CD4-positive, alpha-beta T cell (primary cell): ENCODE measurements at regions of chr10 and their contacts with region 1.

Region 1: DNA sequence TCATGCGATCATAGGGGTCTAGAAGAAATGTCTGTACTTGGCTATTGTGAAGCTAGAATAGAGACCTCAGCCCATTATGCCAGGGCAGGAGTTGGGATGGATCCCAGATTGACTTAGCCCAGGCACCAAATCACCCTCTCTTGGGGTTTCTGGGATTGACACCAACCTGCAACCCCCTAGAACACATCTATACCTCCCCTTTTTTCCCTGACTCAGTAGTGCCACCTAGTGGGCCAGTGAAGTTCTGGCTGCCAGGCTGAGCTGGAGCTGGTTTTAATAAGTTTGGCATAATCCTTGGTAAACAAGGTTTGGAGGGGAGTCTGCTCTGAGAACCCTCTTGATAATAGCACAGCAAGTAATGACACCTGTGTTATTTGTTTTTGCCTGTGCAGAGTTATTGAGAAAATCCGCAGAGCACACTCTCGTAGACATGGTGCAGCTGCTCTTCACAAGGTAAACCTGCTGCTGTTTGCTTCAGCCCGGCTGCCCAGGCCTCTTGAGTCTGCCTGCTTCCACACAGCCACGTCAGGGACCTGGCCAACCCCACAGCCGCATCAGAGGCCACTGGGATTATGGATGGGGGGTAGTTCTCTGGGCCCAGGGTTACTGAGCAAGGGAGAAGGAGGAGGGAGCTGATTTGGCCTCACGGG is 43.3 kb upstream of the NFKB2 start:
- DNase-seq: peak; percentile 54 to 83 (median 66)
- ATAC-seq: peak; percentile 72
- H3K4me3 ChIP-seq: no peak overlapping the region
- H3K4me3 Mint-ChIP-seq: no peak overlapping the region
- H3K27ac ChIP-seq: no peak overlapping the region
- H3K27ac Mint-ChIP-seq: no peak overlapping the region
- H3K4me1 ChIP-seq: no peaks in the 10 kb centered on the region
- H3K4me1 Mint-ChIP-seq: no peaks in the 10 kb centered on the region
- H3K27me3 ChIP-seq: no peaks in the 10 kb centered on the region
- H3K27me3 Mint-ChIP-seq: no peaks in the 10 kb centered on the region
- CTCF ChIP-seq: peak; percentile 96

Region 2: DNA sequence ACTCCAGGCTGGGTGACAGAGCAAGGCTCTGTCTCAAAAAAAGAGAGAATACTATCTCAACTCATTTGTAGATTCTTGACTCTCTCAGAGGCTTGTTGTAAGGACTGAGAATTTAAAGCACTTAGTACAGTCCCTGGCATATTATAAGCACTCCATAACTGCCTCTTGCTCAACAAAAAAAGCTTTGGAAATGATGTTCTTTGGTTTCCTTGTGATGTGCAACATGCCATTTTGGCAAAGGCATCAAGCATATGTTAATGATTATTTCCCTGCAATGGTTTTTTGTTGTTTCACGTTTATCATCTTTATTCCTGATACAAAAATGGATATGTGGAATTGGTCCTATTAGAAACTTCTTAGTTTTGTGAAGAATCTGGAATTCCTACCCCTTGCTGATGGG is 184.3 kb before region 1 on chr10:
- CTCF ChIA-PET with region 1: interaction called, 5 read pairs
- POLR2A ChIA-PET with region 1: interaction called, 4 read pairs
- intact Hi-C with region 1: loop called (anchors 1 to 5 kb)
- DNase-seq: no peak
- ATAC-seq: no peak
- H3K4me3 ChIP-seq: no peak overlapping the region
- H3K4me3 Mint-ChIP-seq: no peak overlapping the region
- H3K27ac ChIP-seq: no peak overlapping the region
- H3K27ac Mint-ChIP-seq: no peak overlapping the region
- H3K4me1 ChIP-seq: peaks cover 10% of the 10 kb centered on the region
- H3K4me1 Mint-ChIP-seq: peaks cover 8% of the 10 kb centered on the region
- H3K27me3 ChIP-seq: no peaks in the 10 kb centered on the region
- H3K27me3 Mint-ChIP-seq: peaks cover 4% of the 10 kb centered on the region
- CTCF ChIP-seq: no peak

Region 3: GRCh38 chr10:102231357-102232318 is 120.6 kb before region 1 on chr10:
- CTCF ChIA-PET with region 1: interaction called, 133 read pairs
- POLR2A ChIA-PET with region 1: interaction called, 26 read pairs
- intact Hi-C with region 1: loop called (anchors 1 kb)
- DNase-seq: peak; percentile 40 to 85 (median 54)
- ATAC-seq: peak; percentile 73
- H3K4me3 ChIP-seq: peak overlapping the region; percentile 59
- H3K4me3 Mint-ChIP-seq: peak overlapping the region; percentile 77
- H3K27ac ChIP-seq: no peak overlapping the region
- H3K27ac Mint-ChIP-seq: no peak overlapping the region
- H3K4me1 ChIP-seq: peaks cover 28% of the 10 kb centered on the region
- H3K4me1 Mint-ChIP-seq: peaks cover 10% of the 10 kb centered on the region
- H3K27me3 ChIP-seq: peaks cover 38 to 50% of the 10 kb centered on the region in 2 experiments
- H3K27me3 Mint-ChIP-seq: peaks cover 83% of the 10 kb centered on the region
- CTCF ChIP-seq: peak; percentile 73

Region 4: DNA sequence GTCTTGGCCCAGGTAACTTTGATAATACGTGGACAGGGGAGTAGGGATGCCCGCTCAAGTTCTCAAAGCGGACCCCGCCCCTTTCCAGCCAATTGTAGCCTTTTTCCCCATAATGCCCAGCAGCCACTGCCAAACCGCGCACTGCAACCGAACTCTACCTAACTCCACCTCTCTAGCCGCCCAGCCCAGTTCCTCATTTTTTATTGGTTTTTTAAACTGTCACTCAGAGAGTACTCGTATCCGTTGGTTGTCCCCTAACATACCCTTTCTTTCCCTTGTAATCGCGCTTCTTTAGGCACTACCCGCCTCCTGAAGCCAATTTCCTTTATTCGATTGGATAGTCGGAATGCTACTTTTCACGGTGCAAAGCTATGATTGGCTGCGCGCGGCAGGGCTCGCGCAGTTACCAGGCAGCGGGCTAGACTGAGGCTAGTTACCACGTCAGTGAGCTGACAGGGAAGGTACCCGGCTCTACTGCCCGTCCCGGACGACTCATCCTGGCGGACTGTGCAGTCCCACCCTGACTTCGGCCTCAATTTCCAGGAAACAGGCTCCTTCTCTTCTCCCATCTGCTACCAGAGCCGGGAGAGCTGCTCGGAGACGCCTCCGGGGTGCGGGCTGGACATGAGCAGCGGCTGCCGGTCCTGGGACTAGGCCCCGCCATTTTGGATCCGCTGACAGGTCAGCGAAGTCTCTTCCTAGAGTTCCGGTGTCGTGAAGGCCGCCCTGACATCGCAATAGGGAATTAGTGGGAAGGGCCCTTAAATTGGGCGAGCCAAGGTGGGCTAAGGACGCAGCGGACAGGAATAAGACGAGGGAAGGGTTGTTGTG is 106.9 kb before region 1 on chr10 and contains the start of gene GBF1:
- CTCF ChIA-PET with region 1: no interaction called
- POLR2A ChIA-PET with region 1: no interaction called
- intact Hi-C with region 1: loop called (anchors 5 kb)
- DNase-seq: peak; percentile 76 to 99 (median 84)
- ATAC-seq: peak; percentile 89
- H3K4me3 ChIP-seq: peak within 1 kb of the TSS; percentile 74
- H3K4me3 Mint-ChIP-seq: peak within 1 kb of the TSS; percentile 96
- H3K27ac ChIP-seq: peak within 1 kb of the TSS; percentile 84 to 88
- H3K27ac Mint-ChIP-seq: peak within 1 kb of the TSS; percentile 86
- H3K4me1 ChIP-seq: peaks cover 60% of the 10 kb centered on the region
- H3K4me1 Mint-ChIP-seq: peaks cover 58% of the 10 kb centered on the region
- H3K27me3 ChIP-seq: peaks cover 20 to 28% of the 10 kb centered on the region in 2 experiments
- H3K27me3 Mint-ChIP-seq: peaks cover 40% of the 10 kb centered on the region
- CTCF ChIP-seq: no peak
- total RNA-seq, gene GBF1: 28.8 to 30.9 TPM

Region 5: GRCh38 chr10:102368072-102368471 is 15.9 kb after region 1 on chr10:
- CTCF ChIA-PET with region 1: interaction called, 13 read pairs
- POLR2A ChIA-PET with region 1: interaction called, 3 read pairs
- intact Hi-C with region 1: no loop called
- DNase-seq: no peak
- ATAC-seq: no peak
- H3K4me3 ChIP-seq: no peak overlapping the region
- H3K4me3 Mint-ChIP-seq: no peak overlapping the region
- H3K27ac ChIP-seq: no peak overlapping the region
- H3K27ac Mint-ChIP-seq: no peak overlapping the region
- H3K4me1 ChIP-seq: no peaks in the 10 kb centered on the region
- H3K4me1 Mint-ChIP-seq: no peaks in the 10 kb centered on the region
- H3K27me3 ChIP-seq: no peaks in the 10 kb centered on the region
- H3K27me3 Mint-ChIP-seq: no peaks in the 10 kb centered on the region
- CTCF ChIP-seq: no peak

Region 6: GRCh38 chr10:102812231-102812876 is 460.2 kb after region 1 on chr10:
- CTCF ChIA-PET with region 1: no interaction called
- POLR2A ChIA-PET with region 1: no interaction called
- intact Hi-C with region 1: no loop called
- DNase-seq: peak in 3 of 14 experiments; percentile 21 to 31 (median 31)
- ATAC-seq: peak; percentile 46
- H3K4me3 ChIP-seq: no peak overlapping the region
- H3K4me3 Mint-ChIP-seq: no peak overlapping the region
- H3K27ac ChIP-seq: no peak overlapping the region
- H3K27ac Mint-ChIP-seq: peak overlapping the region; percentile 32
- H3K4me1 ChIP-seq: peaks cover 15% of the 10 kb centered on the region
- H3K4me1 Mint-ChIP-seq: peaks cover 9% of the 10 kb centered on the region
- H3K27me3 ChIP-seq: no peaks in the 10 kb centered on the region
- H3K27me3 Mint-ChIP-seq: no peaks in the 10 kb centered on the region
- CTCF ChIP-seq: no peak

Region 7: GRCh38 chr10:102945449-102946361 is 593.5 kb after region 1 on chr10:
- CTCF ChIA-PET with region 1: no interaction called
- POLR2A ChIA-PET with region 1: no interaction called
- intact Hi-C with region 1: no loop called
- DNase-seq: no peak
- ATAC-seq: no peak
- H3K4me3 ChIP-seq: no peak overlapping the region
- H3K4me3 Mint-ChIP-seq: no peak overlapping the region
- H3K27ac ChIP-seq: no peak overlapping the region
- H3K27ac Mint-ChIP-seq: no peak overlapping the region
- H3K4me1 ChIP-seq: no peaks in the 10 kb centered on the region
- H3K4me1 Mint-ChIP-seq: no peaks in the 10 kb centered on the region
- H3K27me3 ChIP-seq: no peaks in the 10 kb centered on the region
- H3K27me3 Mint-ChIP-seq: no peaks in the 10 kb centered on the region
- CTCF ChIP-seq: no peak